Right cardiac atrium (tissue), 5 donors: ENCODE measurements at regions of chr18 and their contacts with region 1.

Region 1: GRCh38 chr18:77067291-77068061 is 65.1 kb downstream of the MBP start:
- DNase-seq: peak; percentile 69 to 89 (median 79)
- ATAC-seq: peak; percentile 78 to 80
- H3K4me3 ChIP-seq: no peak overlapping the region
- H3K27ac ChIP-seq: peak overlapping the region; percentile 82
- H3K4me1 ChIP-seq: peaks cover 11% of the 10 kb centered on the region
- H3K27me3 ChIP-seq: no peaks in the 10 kb centered on the region

Region 2: DNA sequence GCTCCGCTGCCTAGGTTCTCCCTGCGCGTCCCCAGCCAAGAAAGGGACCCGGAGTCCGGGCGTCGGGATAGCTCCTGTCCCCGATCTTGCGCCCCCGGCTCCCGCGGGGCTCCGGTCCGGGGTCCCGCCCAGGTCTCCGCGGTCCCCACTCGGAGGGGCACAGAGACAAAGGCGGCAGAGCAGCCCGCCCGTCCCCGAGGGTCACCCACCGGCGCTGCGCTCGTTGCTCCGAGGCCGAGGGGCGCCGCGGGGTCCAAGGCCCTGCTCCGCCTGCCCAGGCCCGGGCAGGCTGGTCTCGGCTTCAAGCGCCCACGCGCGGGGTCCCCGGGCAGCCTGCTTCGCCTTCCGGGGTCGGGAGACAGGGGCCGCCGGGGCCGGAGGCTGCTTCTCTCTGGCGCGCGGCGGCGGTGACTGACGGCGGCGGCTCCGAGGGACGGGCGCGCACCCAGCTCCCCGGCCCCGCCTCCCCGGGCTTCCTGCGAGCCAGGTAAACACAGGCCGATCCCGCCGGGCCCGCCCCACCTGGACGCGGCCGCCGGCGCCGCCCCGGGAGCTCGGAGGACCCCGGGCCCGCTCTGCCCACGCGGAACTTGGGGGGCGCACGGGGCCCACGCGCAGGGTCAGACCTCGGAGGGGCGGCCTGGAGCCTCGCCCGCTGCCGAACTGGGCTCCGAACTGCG is 65.0 kb after region 1 on chr18 and contains the start of gene MBP:
- intact Hi-C with region 1: loop called in 1 of 4 experiments (anchors 5 kb)
- DNase-seq: peak; percentile 61 to 83 (median 81)
- ATAC-seq: peak; percentile 49 to 59
- H3K4me3 ChIP-seq: peak within 1 kb of the TSS; percentile 56
- H3K27ac ChIP-seq: peak within 1 kb of the TSS; percentile 59
- H3K4me1 ChIP-seq: peaks cover 3% of the 10 kb centered on the region
- H3K27me3 ChIP-seq: no peaks in the 10 kb centered on the region
- total RNA-seq, gene MBP: 14.6 to 26.4 (median 19.6) TPM

Region 3: DNA sequence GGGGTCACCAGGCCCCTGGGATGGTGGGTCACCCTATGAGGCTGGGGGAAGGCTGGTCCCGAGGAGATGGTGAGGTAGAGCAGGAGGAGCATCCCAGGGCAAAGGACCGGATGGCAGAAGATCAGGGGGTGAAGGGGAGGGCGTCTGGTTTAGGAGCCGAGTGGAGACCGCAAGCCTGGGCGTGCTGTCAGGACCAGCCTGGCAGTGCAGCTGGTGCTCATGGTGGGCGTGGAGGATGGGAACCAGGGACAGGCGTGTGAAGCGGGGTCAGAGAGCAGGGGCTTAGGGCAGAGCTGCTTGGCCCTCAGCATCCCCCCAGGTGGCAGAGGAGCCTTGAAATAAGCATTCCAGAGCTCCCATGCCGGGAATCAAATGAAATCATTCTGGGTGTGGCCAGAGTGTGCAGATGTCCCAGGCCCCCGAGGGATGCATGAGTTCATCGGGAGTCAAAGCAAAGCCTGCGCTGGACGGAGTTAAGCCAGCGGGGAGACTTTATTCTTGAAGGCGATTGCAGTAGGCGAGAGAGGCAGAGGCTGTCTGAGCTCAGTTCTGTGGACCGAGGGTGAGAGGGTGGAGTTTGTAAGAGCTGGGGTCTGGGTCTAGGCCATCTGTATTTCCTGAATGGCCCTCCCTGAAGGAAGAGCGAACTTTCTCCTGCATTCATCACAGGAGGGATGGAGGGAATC is 98.2 kb after region 1 on chr18:
- intact Hi-C with region 1: no loop called
- DNase-seq: peak in 2 of 3 donors; percentile 73 to 81
- ATAC-seq: peak; percentile 67 to 78
- H3K4me3 ChIP-seq: no peak overlapping the region
- H3K27ac ChIP-seq: no peak overlapping the region
- H3K4me1 ChIP-seq: no peaks in the 10 kb centered on the region
- H3K27me3 ChIP-seq: no peaks in the 10 kb centered on the region

Region 4: DNA sequence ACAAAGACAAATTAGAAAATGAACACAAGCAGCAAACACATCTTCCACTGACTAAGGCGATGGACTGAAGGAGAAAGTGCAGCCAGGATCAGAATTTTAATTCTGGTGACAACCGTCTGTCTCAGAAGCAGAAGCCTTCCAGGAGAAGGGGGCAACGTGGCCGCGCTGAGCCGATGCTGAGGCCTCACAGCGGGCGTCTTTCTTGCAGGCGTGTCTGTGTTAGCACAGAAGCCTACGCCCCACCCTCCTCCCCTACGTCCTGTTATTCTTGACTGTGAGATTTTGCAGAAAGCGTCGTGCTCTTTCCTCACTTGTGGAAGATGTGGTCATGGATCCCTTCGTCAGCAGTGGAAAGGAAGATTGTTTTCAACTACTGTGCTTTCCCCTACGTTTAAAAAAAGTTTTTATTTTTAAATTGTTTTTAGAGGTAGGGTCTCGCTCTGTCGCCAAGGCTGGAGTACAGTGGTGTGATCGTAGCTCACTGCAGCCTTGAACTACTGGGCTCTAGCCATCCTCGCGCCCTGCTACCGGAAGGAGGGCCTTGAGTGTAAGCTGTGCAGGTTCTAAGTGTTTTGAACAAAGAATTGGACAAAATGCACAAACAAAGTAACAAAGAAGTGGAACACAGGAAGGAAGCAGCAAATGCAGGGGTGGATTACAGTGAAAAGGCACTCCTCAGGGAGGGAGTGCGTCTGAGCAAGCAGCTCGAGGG is 604.1 kb after region 1 on chr18:
- intact Hi-C with region 1: no loop called
- DNase-seq: no peak
- ATAC-seq: no peak
- H3K4me3 ChIP-seq: no peak overlapping the region
- H3K27ac ChIP-seq: no peak overlapping the region
- H3K4me1 ChIP-seq: no peaks in the 10 kb centered on the region
- H3K27me3 ChIP-seq: no peaks in the 10 kb centered on the region